WTC11 (cell line): ENCODE measurements at regions of chr3 and their contacts with region 1.

Region 1: GRCh38 chr3:168620826-168621225 is 525.1 kb upstream of the GOLIM4 start:
- DNase-seq: peak; percentile 70
- ATAC-seq: peak; percentile 88
- H3K4me3 Mint-ChIP-seq: no peak overlapping the region
- H3K27ac Mint-ChIP-seq: peak overlapping the region; percentile 62; the same call in 1 of the 2 replicates
- H3K4me1 Mint-ChIP-seq: peaks cover 77% of the 10 kb centered on the region
- H3K27me3 Mint-ChIP-seq: no peaks in the 10 kb centered on the region
- CTCF ChIP-seq: peak; percentile 58

Region 2: GRCh38 chr3:168213920-168214319 is 406.9 kb before region 1 on chr3:
- CTCF ChIA-PET with region 1: interaction called, 51 read pairs
- POLR2A ChIA-PET with region 1: interaction called, 4 read pairs
- DNase-seq: no peak
- ATAC-seq: no peak
- H3K4me3 Mint-ChIP-seq: no peak overlapping the region
- H3K27ac Mint-ChIP-seq: no peak overlapping the region
- H3K4me1 Mint-ChIP-seq: peaks cover 25% of the 10 kb centered on the region
- H3K27me3 Mint-ChIP-seq: peaks cover 3% of the 10 kb centered on the region; the same call in 1 of the 2 replicates
- CTCF ChIP-seq: no peak

Region 3: GRCh38 chr3:168511428-168512014 is 109.3 kb before region 1 on chr3:
- CTCF ChIA-PET with region 1: interaction called, 37 read pairs
- POLR2A ChIA-PET with region 1: interaction called, 5 read pairs
- DNase-seq: no peak
- ATAC-seq: no peak
- H3K4me3 Mint-ChIP-seq: no peak overlapping the region
- H3K27ac Mint-ChIP-seq: no peak overlapping the region
- H3K4me1 Mint-ChIP-seq: peaks cover 60% of the 10 kb centered on the region
- H3K27me3 Mint-ChIP-seq: no peaks in the 10 kb centered on the region
- CTCF ChIP-seq: 0 out of 2 replicates have a peak, but pooled peaks have one; percentile 22

Region 4: DNA sequence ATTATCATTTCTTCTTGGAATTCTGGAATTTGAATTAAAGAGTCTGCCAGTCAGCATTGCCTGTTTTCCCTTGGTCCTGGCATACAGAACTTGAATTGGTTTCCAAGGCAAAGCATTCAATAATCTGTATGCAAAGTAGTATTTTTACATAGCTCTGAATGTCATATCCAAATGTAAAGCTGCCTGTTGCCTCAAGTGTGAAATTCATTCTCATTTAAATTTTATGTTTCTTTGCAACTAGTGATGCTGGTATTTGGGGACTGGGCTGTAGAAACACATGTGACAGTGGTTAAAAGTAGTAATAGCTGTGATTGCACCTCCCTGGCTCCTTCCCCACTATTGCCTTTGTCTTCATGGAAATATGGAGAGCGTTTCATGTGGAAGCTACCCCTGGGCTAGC is 218.8 kb after region 1 on chr3:
- CTCF ChIA-PET with region 1: interaction called, 12 read pairs
- POLR2A ChIA-PET with region 1: no interaction called
- DNase-seq: no peak
- ATAC-seq: peak; percentile 80
- H3K4me3 Mint-ChIP-seq: peak overlapping the region; percentile 6
- H3K27ac Mint-ChIP-seq: peak overlapping the region; percentile 96
- H3K4me1 Mint-ChIP-seq: peaks cover 71% of the 10 kb centered on the region
- H3K27me3 Mint-ChIP-seq: no peaks in the 10 kb centered on the region; the same call in 1 of the 2 replicates
- CTCF ChIP-seq: no peak